ENCODE measurements at regions of chr12 and their contacts with region 1.

Region 1: GRCh38 chr12:94305130-94305957 is 154.3 kb downstream of the CEP83 start:
- DNase-seq: no peak
- H3K4me3 ChIP-seq: no peak overlapping the region
- H3K27ac ChIP-seq: peak overlapping the region in 1 of 2 donors; percentile 2
- H3K4me1 ChIP-seq: no peaks in the 10 kb centered on the region
- H3K27me3 ChIP-seq: no peaks in the 10 kb centered on the region
- CTCF ChIP-seq: no peak
- POLR2A ChIP-seq: no peak

Region 2: DNA sequence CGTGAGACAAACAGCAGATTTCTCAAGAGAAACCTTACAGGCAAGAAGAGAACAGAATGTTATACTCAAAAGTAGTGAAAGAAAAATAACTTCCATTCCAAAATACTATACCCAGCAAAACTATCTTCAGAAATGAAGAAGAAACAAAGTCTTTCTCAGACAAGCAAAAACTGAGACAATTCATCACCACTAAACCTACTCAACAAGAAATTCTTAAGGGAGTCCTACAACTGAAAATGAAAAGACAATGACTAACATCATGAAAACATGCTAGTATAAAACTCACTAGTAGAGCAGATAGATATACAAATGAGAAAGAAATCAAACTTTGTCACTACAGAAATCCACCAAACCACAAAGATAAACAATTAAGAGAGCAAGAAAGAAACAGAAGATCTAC is 47.8 kb after region 1 on chr12:
- intact Hi-C with region 1: no loop called
- DNase-seq: no peak
- H3K4me3 ChIP-seq: no peak overlapping the region
- H3K27ac ChIP-seq: no peak overlapping the region
- H3K4me1 ChIP-seq: no peaks in the 10 kb centered on the region
- H3K27me3 ChIP-seq: no peaks in the 10 kb centered on the region
- CTCF ChIP-seq: no peak
- POLR2A ChIP-seq: no peak

Region 3: GRCh38 chr12:95205685-95206084 is 900.3 kb after region 1 on chr12:
- intact Hi-C with region 1: loop called (anchors 5 kb)
- DNase-seq: peak in 1 of 2 donors; percentile 40
- H3K4me3 ChIP-seq: peak overlapping the region in 1 of 3 donors; percentile 19
- H3K27ac ChIP-seq: peak overlapping the region; percentile 84 to 89
- H3K4me1 ChIP-seq: peaks cover 0 to 6% of the 10 kb centered on the region in 2 donors
- H3K27me3 ChIP-seq: no peaks in the 10 kb centered on the region
- CTCF ChIP-seq: no peak
- POLR2A ChIP-seq: no peak

Region 4: DNA sequence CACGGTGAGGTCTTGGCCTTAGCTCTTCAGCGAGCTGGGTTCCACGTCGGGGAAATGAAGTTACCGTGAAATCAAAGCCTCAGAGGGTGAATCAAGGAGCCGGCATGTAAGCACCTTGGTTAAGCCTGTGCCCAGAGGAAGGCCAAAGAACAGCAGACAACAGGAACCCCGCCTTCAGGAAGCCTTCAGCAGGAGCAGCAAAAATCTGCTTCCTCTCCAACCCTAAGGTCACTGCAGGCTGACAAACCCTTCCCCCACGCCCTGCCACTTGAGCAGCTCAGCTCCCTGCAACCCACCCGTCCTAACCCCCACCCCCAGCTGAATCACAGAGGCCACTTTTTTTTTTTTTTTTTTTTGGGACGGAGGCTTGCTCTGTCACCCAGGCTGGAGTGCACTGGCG is 1803.0 kb after region 1 on chr12:
- intact Hi-C with region 1: no loop called
- DNase-seq: no peak
- H3K4me3 ChIP-seq: no peak overlapping the region
- H3K27ac ChIP-seq: peak overlapping the region in 1 of 2 donors; percentile 14
- H3K4me1 ChIP-seq: no peaks in the 10 kb centered on the region
- H3K27me3 ChIP-seq: no peaks in the 10 kb centered on the region
- CTCF ChIP-seq: no peak
- POLR2A ChIP-seq: no peak

Measured in breast epithelium (tissue), 4 donors.